H1 (cell line): ENCODE measurements at regions of chr11 and their contacts with region 1.

Region 1: GRCh38 chr11:72141066-72141465 is 5.5 kb downstream of the FOLR3 start:
- DNase-seq: no peak
- H3K4me3 ChIP-seq: no peak overlapping the region
- H3K27ac ChIP-seq: no peak overlapping the region
- H3K4me1 ChIP-seq: no peaks in the 10 kb centered on the region
- H3K27me3 ChIP-seq: no peaks in the 10 kb centered on the region
- CTCF ChIP-seq: no peak
- EP300 ChIP-seq: no peak
- POLR2A ChIP-seq: no peak
- RAD21 ChIP-seq: no peak

Region 2: GRCh38 chr11:72102946-72103753 is 37.9 kb before region 1 on chr11 and contains the start of gene LAMTOR1:
- CTCF ChIA-PET with region 1: interaction called, 22 read pairs
- POLR2A ChIA-PET with region 1: no interaction called
- DNase-seq: peak; percentile 97 to 98
- H3K4me3 ChIP-seq: peak within 1 kb of the TSS; percentile 95 to 98 (median 97)
- H3K27ac ChIP-seq: peak within 1 kb of the TSS; percentile 86
- H3K4me1 ChIP-seq: peaks cover 3 to 14% (median 5%) of the 10 kb centered on the region in 4 experiments; a peak in 6 of 7 replicates
- H3K27me3 ChIP-seq: no peaks in the 10 kb centered on the region
- CTCF ChIP-seq: peak; percentile 16 to 60 (median 36); a peak in 3 of 4 replicates
- EP300 ChIP-seq: peak in 1 of 2 experiments; percentile 39; a peak in 1 of 3 replicates
- POLR2A ChIP-seq: peak; percentile 88 to 96
- RAD21 ChIP-seq: peak; percentile 21 to 37; a peak in 2 of 4 replicates
- total RNA-seq, gene LAMTOR1: 81.0 and 82.1 TPM in 2 replicates

Region 3: DNA sequence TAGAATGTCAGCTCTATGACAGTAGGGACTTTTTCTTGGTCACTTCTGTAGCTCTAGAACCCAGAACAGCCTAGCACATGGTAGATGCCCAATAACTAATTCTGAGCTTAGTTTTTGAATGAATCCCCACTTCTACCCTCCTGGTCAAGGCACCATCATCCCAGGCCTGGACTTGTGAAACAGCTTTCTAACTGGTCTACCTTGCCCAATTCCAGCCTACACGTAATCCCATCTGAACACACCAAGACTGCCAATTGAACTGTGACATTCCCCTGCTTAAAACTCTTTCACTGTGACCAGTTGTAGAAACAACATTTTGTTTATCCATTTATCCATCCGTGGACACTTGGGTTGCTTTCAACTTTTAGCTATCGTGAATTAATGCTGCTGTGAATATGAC is 11.7 kb before region 1 on chr11:
- CTCF ChIA-PET with region 1: interaction called, 22 read pairs
- POLR2A ChIA-PET with region 1: interaction called, 3 read pairs
- DNase-seq: no peak
- H3K4me3 ChIP-seq: no peak overlapping the region
- H3K27ac ChIP-seq: no peak overlapping the region
- H3K4me1 ChIP-seq: no peaks in the 10 kb centered on the region
- H3K27me3 ChIP-seq: no peaks in the 10 kb centered on the region; a peak in 2 of 7 replicates
- CTCF ChIP-seq: no peak
- EP300 ChIP-seq: no peak
- POLR2A ChIP-seq: no peak
- RAD21 ChIP-seq: no peak

Region 4: GRCh38 chr11:72174299-72175070 is 33.4 kb after region 1 on chr11:
- CTCF ChIA-PET with region 1: interaction called, 12 read pairs
- POLR2A ChIA-PET with region 1: no interaction called
- DNase-seq: no peak
- H3K4me3 ChIP-seq: no peak overlapping the region
- H3K27ac ChIP-seq: no peak overlapping the region
- H3K4me1 ChIP-seq: no peaks in the 10 kb centered on the region
- H3K27me3 ChIP-seq: no peaks in the 10 kb centered on the region
- CTCF ChIP-seq: no peak
- EP300 ChIP-seq: no peak
- POLR2A ChIP-seq: no peak
- RAD21 ChIP-seq: no peak

Region 5: DNA sequence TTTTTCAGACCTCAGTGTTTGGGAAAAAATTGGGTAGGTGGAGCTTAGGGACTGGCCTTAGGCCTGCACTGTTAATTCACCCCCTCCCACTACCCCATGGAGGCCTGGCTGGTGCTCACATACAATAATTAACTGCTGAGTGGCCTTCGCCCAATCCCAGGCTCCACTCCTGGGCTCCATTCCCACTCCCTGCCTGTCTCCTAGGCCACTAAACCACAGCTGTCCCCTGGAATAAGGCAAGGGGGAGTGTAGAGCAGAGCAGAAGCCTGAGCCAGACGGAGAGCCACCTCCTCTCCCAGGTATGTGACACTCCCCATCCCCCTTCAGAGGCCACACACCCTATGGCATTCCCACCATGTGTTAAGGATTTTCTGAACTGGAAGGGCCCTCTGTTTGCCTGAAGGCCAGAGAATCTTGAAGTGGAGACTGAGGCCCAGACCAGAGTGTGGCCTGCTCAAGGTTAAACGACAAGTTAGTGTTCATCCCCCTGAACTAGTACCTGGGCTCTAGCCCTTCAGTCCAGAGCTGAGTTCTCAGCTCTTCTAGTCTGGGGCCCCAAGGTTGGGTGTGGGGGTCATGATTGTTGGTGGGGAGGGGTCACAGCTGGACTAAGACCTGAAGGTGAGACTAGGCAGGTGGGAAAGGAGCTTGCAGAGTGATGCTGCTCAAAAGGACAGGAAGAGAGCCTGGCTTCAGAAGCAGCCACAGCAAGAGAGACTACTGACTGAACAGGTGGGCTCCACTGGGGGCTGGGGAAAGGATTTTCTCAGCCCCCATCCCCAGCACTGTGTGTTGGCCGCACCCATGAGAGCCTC is 48.6 kb after region 1 on chr11:
- CTCF ChIA-PET with region 1: interaction called, 19 read pairs
- POLR2A ChIA-PET with region 1: no interaction called
- DNase-seq: no peak
- H3K4me3 ChIP-seq: no peak overlapping the region
- H3K27ac ChIP-seq: no peak overlapping the region
- H3K4me1 ChIP-seq: peaks cover 0 to 3% (median 0%) of the 10 kb centered on the region in 4 experiments; a peak in 1 of 7 replicates
- H3K27me3 ChIP-seq: no peaks in the 10 kb centered on the region
- CTCF ChIP-seq: no peak
- EP300 ChIP-seq: no peak
- POLR2A ChIP-seq: no peak
- RAD21 ChIP-seq: no peak

Region 6: GRCh38 chr11:72228229-72228843 is 87.3 kb after region 1 on chr11:
- CTCF ChIA-PET with region 1: no interaction called
- POLR2A ChIA-PET with region 1: no interaction called
- DNase-seq: no peak
- H3K4me3 ChIP-seq: no peak overlapping the region
- H3K27ac ChIP-seq: no peak overlapping the region
- H3K4me1 ChIP-seq: peaks cover 0 to 5% (median 3%) of the 10 kb centered on the region in 4 experiments; a peak in 4 of 7 replicates
- H3K27me3 ChIP-seq: no peaks in the 10 kb centered on the region
- CTCF ChIP-seq: peak in 1 of 3 experiments; percentile 24; a peak in 1 of 4 replicates
- EP300 ChIP-seq: no peak
- POLR2A ChIP-seq: no peak
- RAD21 ChIP-seq: 0 out of 4 replicates have a peak, but pooled peaks of 1 of the 2 experiments have one; percentile 2